Activated CD4-positive, alpha-beta memory T cell treated with anti-CD3 and anti-CD28 coated beads for 36 hours (primary cell): ENCODE measurements at regions of chr11 and their contacts with region 1.

Region 1: GRCh38 chr11:2142762-2143202 is 3.6 kb upstream of the IGF2 start:
- DNase-seq: peak; percentile 65
- H3K4me3 Mint-ChIP-seq: peak overlapping the region; percentile 53
- H3K27ac Mint-ChIP-seq: peak overlapping the region; percentile 32
- H3K4me1 Mint-ChIP-seq: peaks cover 33% of the 10 kb centered on the region
- H3K27me3 Mint-ChIP-seq: peaks cover 56% of the 10 kb centered on the region

Region 2: GRCh38 chr11:2077061-2077802 is 65.5 kb before region 1 on chr11:
- CTCF ChIA-PET with region 1: interaction called, 7 read pairs
- POLR2A ChIA-PET with region 1: interaction called, 31 read pairs
- intact Hi-C with region 1: loop called (anchors 1 kb)
- DNase-seq: peak; percentile 77
- H3K4me3 Mint-ChIP-seq: no peak overlapping the region
- H3K27ac Mint-ChIP-seq: peak overlapping the region; percentile 80
- H3K4me1 Mint-ChIP-seq: peaks cover 20% of the 10 kb centered on the region
- H3K27me3 Mint-ChIP-seq: peaks cover 22% of the 10 kb centered on the region

Region 3: GRCh38 chr11:2173150-2173693 is 30.4 kb after region 1 on chr11:
- CTCF ChIA-PET with region 1: no interaction called
- POLR2A ChIA-PET with region 1: no interaction called
- intact Hi-C with region 1: no loop called
- DNase-seq: no peak
- H3K4me3 Mint-ChIP-seq: no peak overlapping the region
- H3K27ac Mint-ChIP-seq: no peak overlapping the region
- H3K4me1 Mint-ChIP-seq: no peaks in the 10 kb centered on the region
- H3K27me3 Mint-ChIP-seq: no peaks in the 10 kb centered on the region